CD4-positive, alpha-beta memory T cell (primary cell): ENCODE measurements at regions of chr6 and their contacts with region 1.

Region 1: GRCh38 chr6:83067448-83068413 is at the start of gene DOP1A:
- DNase-seq: peak; percentile 94 to 95 (median 94)
- H3K4me3 ChIP-seq: peak within 1 kb of the TSS; percentile 30 to 84
- H3K4me3 Mint-ChIP-seq: peak within 1 kb of the TSS; percentile 86 to 99 (median 95)
- H3K27ac ChIP-seq: peak within 1 kb of the TSS; percentile 98
- H3K27ac Mint-ChIP-seq: peak within 1 kb of the TSS; percentile 92 to 97 (median 96)
- H3K4me1 ChIP-seq: peaks cover 31% of the 10 kb centered on the region
- H3K4me1 Mint-ChIP-seq: peaks cover 24 to 54% (median 41%) of the 10 kb centered on the region in 4 donors
- H3K27me3 ChIP-seq: no peaks in the 10 kb centered on the region
- H3K27me3 Mint-ChIP-seq: no peaks in the 10 kb centered on the region
- total RNA-seq, gene DOP1A: 32.5 to 36.6 TPM

Region 2: DNA sequence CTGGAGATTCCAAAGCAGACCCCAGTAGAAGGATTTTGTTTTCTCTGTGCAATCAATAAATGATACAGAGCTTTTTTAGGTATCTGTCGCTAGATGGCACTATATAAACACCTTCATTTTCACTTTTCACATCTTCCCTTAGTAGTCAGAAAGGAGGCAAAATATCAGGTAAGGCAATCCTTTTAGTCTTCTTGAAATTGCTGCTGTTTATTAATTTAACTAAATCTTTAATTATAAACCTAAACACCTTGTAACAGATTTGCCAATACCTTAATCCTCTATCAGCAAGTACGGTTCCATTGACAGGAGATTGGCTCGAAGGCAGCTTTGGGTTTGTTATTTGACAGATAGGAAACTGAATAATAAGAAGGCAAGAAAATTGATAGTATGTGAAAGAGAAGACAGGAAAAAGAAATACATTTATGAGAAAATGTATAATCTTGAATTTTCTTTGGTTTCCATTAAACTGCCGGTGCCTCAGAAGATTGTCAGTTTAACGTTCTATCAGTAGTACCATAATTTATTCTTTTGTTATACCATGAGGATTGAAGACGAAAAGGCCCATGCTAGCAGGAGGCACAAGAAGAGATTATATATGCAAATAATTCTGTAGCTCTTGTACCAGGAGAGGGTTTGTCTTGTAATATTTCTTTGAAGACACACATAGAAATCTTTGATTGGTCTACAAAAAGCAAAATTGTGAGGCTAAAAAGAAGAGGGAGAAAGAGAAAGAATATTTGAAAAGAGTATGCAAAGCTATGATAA is 796.7 kb before region 1 on chr6:
- CTCF ChIA-PET with region 1: interaction called, 98 read pairs
- POLR2A ChIA-PET with region 1: interaction called, 5 read pairs
- intact Hi-C with region 1: no loop called
- DNase-seq: peak in 4 of 5 donors; percentile 37 to 52 (median 40)
- H3K4me3 ChIP-seq: no peak overlapping the region
- H3K4me3 Mint-ChIP-seq: no peak overlapping the region
- H3K27ac ChIP-seq: no peak overlapping the region
- H3K27ac Mint-ChIP-seq: peak overlapping the region in 1 of 7 donors; percentile 37
- H3K4me1 ChIP-seq: no peaks in the 10 kb centered on the region
- H3K4me1 Mint-ChIP-seq: peaks cover 0 to 1% (median 0%) of the 10 kb centered on the region in 4 donors
- H3K27me3 ChIP-seq: no peaks in the 10 kb centered on the region
- H3K27me3 Mint-ChIP-seq: peaks cover 0 to 3% of the 10 kb centered on the region in 2 donors

Region 3: GRCh38 chr6:82875573-82876185 is 192.1 kb before region 1 on chr6:
- CTCF ChIA-PET with region 1: no interaction called
- POLR2A ChIA-PET with region 1: no interaction called
- intact Hi-C with region 1: no loop called
- DNase-seq: no peak
- H3K4me3 ChIP-seq: no peak overlapping the region
- H3K4me3 Mint-ChIP-seq: no peak overlapping the region
- H3K27ac ChIP-seq: no peak overlapping the region
- H3K27ac Mint-ChIP-seq: no peak overlapping the region
- H3K4me1 ChIP-seq: no peaks in the 10 kb centered on the region
- H3K4me1 Mint-ChIP-seq: no peaks in the 10 kb centered on the region
- H3K27me3 ChIP-seq: no peaks in the 10 kb centered on the region
- H3K27me3 Mint-ChIP-seq: peaks cover 0 to 4% of the 10 kb centered on the region in 2 donors

Region 4: DNA sequence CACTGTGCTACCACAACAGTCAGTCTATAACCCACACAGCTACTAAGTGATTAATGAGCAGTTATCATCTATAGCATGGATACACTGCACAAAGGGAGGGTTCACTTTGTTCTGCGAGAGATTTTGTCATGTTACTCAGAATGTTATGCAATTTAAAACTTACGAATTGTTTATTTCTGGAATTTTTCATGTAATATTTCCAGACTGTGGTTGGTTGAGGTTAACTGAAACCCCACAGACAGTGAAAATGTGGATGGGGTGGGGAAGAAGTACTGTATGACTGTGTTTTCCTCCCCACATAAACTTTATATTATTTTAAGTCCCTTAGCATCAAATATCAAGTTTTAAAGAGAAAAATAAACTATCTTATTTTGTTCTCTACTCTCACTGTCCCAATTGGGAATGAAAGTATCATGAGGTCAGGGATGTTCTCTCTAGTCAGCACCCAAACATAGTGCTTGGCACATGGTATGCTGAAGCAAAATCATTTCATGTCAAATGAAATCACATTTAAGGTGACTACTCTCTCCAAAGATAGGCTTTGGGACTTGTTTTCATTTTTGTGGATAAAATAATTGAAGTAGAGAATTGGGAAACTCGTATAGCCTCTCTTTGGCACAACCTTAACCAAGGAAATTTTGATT is 25.1 kb after region 1 on chr6:
- CTCF ChIA-PET with region 1: interaction called, 15 read pairs
- POLR2A ChIA-PET with region 1: no interaction called
- intact Hi-C with region 1: no loop called
- DNase-seq: no peak
- H3K4me3 ChIP-seq: no peak overlapping the region
- H3K4me3 Mint-ChIP-seq: no peak overlapping the region
- H3K27ac ChIP-seq: no peak overlapping the region
- H3K27ac Mint-ChIP-seq: no peak overlapping the region
- H3K4me1 ChIP-seq: no peaks in the 10 kb centered on the region
- H3K4me1 Mint-ChIP-seq: peaks cover 6 to 22% (median 15%) of the 10 kb centered on the region in 4 donors
- H3K27me3 ChIP-seq: no peaks in the 10 kb centered on the region
- H3K27me3 Mint-ChIP-seq: no peaks in the 10 kb centered on the region

Region 5: GRCh38 chr6:83169511-83169910 is 101.8 kb after region 1 on chr6:
- CTCF ChIA-PET with region 1: interaction called, 13 read pairs
- POLR2A ChIA-PET with region 1: no interaction called
- intact Hi-C with region 1: no loop called
- DNase-seq: no peak
- H3K4me3 ChIP-seq: no peak overlapping the region
- H3K4me3 Mint-ChIP-seq: no peak overlapping the region
- H3K27ac ChIP-seq: no peak overlapping the region
- H3K27ac Mint-ChIP-seq: peak overlapping the region in 1 of 7 donors; percentile 33
- H3K4me1 ChIP-seq: no peaks in the 10 kb centered on the region
- H3K4me1 Mint-ChIP-seq: no peaks in the 10 kb centered on the region
- H3K27me3 ChIP-seq: no peaks in the 10 kb centered on the region
- H3K27me3 Mint-ChIP-seq: no peaks in the 10 kb centered on the region

Region 6: GRCh38 chr6:83215131-83216047 is 147.7 kb after region 1 on chr6:
- CTCF ChIA-PET with region 1: interaction called, 186 read pairs
- POLR2A ChIA-PET with region 1: interaction called, 18 read pairs
- intact Hi-C with region 1: loop called (anchors 1 kb)
- DNase-seq: peak; percentile 49 to 51 (median 50)
- H3K4me3 ChIP-seq: no peak overlapping the region
- H3K4me3 Mint-ChIP-seq: no peak overlapping the region
- H3K27ac ChIP-seq: no peak overlapping the region
- H3K27ac Mint-ChIP-seq: no peak overlapping the region
- H3K4me1 ChIP-seq: no peaks in the 10 kb centered on the region
- H3K4me1 Mint-ChIP-seq: no peaks in the 10 kb centered on the region
- H3K27me3 ChIP-seq: no peaks in the 10 kb centered on the region
- H3K27me3 Mint-ChIP-seq: peaks cover 3 to 9% of the 10 kb centered on the region in 2 donors

Region 7: GRCh38 chr6:83247471-83247870 is 179.7 kb after region 1 on chr6:
- CTCF ChIA-PET with region 1: no interaction called
- POLR2A ChIA-PET with region 1: no interaction called
- intact Hi-C with region 1: no loop called
- DNase-seq: no peak
- H3K4me3 ChIP-seq: no peak overlapping the region
- H3K4me3 Mint-ChIP-seq: no peak overlapping the region
- H3K27ac ChIP-seq: no peak overlapping the region
- H3K27ac Mint-ChIP-seq: no peak overlapping the region
- H3K4me1 ChIP-seq: no peaks in the 10 kb centered on the region
- H3K4me1 Mint-ChIP-seq: no peaks in the 10 kb centered on the region
- H3K27me3 ChIP-seq: peaks cover 3% of the 10 kb centered on the region
- H3K27me3 Mint-ChIP-seq: peaks cover 6 to 7% of the 10 kb centered on the region in 2 donors

Region 8: DNA sequence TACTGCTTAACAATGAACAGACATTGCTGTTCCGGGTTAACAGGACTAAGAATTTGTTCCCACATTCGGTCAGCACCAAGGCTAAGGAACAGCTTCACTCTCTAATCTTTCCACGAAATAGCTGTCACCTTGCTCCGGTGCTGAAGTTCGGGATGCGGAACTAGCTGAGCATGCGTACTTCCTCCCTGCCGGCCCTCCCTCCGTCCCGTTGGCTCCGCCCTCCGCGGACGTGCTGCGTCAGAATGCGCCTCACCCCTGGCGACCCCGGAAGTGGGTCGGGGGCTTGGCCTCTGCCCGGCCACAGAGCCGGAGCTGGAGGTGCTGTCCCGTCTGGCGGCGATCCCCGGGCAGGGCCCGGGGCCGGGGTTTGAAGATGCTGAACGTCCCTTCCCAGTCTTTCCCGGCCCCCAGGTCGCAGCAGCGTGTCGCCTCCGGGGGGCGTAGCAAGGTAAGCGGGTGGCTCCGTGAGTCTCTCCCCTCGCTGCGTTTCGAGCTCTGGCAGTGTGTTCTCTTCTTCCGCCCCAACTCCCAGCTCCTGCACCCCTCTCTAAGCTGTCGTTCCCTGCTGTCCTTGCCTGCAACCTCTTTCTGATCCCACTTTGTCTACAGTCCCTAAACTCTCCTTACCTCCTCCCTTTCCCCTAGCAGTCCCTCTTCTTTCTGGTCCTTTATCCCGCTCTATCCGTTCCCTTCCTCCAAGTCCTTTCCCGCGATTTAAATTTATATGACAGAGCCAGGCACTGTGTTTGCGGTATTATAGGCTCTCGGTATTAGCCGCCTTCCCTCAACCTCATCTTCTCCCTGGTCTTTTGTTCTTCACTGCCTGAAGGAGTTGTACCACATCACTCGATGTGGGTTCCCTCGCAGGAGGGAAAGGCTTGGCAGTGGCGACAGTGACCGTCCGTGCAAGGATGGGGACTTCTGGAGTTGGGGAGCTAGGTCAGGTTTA is 792.0 kb after region 1 on chr6 and contains the start of gene CYB5R4:
- CTCF ChIA-PET with region 1: interaction called, 5 read pairs
- POLR2A ChIA-PET with region 1: interaction called, 4 read pairs
- intact Hi-C with region 1: loop called (anchors 1 kb)
- DNase-seq: peak; percentile 94 to 95 (median 94)
- H3K4me3 ChIP-seq: peak within 1 kb of the TSS; percentile 87 to 95
- H3K4me3 Mint-ChIP-seq: peak within 1 kb of the TSS; percentile 94 to 99 (median 98)
- H3K27ac ChIP-seq: peak within 1 kb of the TSS; percentile 79
- H3K27ac Mint-ChIP-seq: peak within 1 kb of the TSS; percentile 87 to 97 (median 95)
- H3K4me1 ChIP-seq: peaks cover 22% of the 10 kb centered on the region
- H3K4me1 Mint-ChIP-seq: peaks cover 29 to 46% (median 37%) of the 10 kb centered on the region in 4 donors
- H3K27me3 ChIP-seq: no peaks in the 10 kb centered on the region
- H3K27me3 Mint-ChIP-seq: peaks cover 9% of the 10 kb centered on the region in 2 donors
- total RNA-seq, gene CYB5R4: 24.0 to 26.2 TPM